ENCODE measurements at regions of chr20 and their contacts with region 1.

Region 1: DNA sequence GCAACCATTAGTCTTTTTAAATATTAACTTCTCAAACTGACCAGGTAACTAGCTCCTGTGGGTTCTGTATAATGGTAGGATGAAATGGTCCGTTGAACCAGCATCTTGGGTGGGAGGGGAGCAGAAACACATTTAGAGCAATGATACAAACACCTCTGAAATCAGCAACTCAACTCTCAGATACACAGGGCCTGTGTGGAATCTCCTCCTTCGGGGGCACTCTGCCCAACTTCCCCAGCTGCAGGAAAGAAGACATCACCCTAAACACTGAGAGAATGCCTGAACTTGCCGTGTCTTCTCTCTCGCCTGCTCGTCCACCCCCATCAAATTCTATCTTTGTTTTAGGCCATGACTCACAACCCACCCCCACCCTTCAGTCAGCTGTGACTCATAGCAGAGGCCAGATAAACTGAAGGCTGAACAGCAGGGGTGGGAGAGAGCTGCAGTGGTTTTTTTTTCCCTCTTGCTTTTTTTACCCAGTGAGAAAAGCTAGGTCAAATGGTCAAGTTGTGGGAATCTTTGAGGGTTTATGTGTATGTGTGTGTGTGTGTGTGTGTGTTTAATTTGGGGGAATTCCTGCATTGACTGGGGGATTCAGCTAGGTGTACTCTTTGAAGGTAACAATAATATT is 593.4 kb upstream of the JAG1 start:
- DNase-seq: no peak
- ATAC-seq: peak; percentile 14
- H3K4me3 Mint-ChIP-seq: no peak overlapping the region
- H3K27ac Mint-ChIP-seq: no peak overlapping the region
- H3K4me1 Mint-ChIP-seq: peaks cover 39% of the 10 kb centered on the region
- H3K27me3 Mint-ChIP-seq: no peaks in the 10 kb centered on the region
- CTCF ChIP-seq: no peak

Region 2: GRCh38 chr20:11204926-11205768 is 62.1 kb before region 1 on chr20:
- CTCF ChIA-PET with region 1: interaction called, 12 read pairs
- POLR2A ChIA-PET with region 1: no interaction called
- DNase-seq: peak; percentile 72
- ATAC-seq: peak; percentile 97
- H3K4me3 Mint-ChIP-seq: no peak overlapping the region
- H3K27ac Mint-ChIP-seq: no peak overlapping the region
- H3K4me1 Mint-ChIP-seq: peaks cover 23% of the 10 kb centered on the region
- H3K27me3 Mint-ChIP-seq: no peaks in the 10 kb centered on the region
- CTCF ChIP-seq: peak; percentile 62; the same call in 1 of the 2 replicates